ENCODE measurements at regions of chr7 and their contacts with region 1.

Region 1: DNA sequence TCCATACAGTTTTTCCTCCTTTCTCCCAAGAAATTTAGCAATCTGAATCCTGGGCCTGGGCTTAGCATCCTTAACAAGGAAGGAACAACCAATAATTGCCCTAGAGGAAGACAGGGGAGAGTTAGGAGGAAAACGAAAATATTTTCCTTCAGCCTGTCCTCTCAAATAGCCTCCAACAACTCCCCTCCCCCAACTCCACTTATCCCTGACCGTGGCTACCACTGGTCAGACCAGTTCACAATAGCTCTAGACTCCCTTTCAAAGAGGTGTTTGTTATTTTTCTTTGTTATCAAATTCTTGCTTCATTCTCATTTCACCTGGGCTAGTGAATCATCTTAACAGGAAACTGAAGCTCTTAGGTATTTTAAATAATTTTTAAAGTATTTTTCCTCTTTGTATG is 114.1 kb downstream of the CPED1 start:
- DNase-seq: peak; percentile 62
- H3K4me3 ChIP-seq: no peak overlapping the region
- H3K27ac ChIP-seq: no peak overlapping the region
- H3K4me1 ChIP-seq: peaks cover 13% of the 10 kb centered on the region
- H3K27me3 ChIP-seq: no peaks in the 10 kb centered on the region
- CTCF ChIP-seq: no peak

Region 2: GRCh38 chr7:120996333-120996987 is 106.2 kb before region 1 on chr7:
- CTCF ChIA-PET with region 1: no interaction called
- dilution Hi-C with region 1: loop called (anchors 5 kb)
- in situ Hi-C with region 1: no loop called
- intact Hi-C with region 1: no loop called
- DNase-seq: peak; percentile 79
- H3K4me3 ChIP-seq: no peak overlapping the region
- H3K27ac ChIP-seq: no peak overlapping the region
- H3K4me1 ChIP-seq: peaks cover 8% of the 10 kb centered on the region
- H3K27me3 ChIP-seq: no peaks in the 10 kb centered on the region
- CTCF ChIP-seq: no peak

Measured in mammary epithelial cell (primary cell).